IMR-90 (cell line): ENCODE measurements at regions of chr15 and their contacts with region 1.

Region 1: DNA sequence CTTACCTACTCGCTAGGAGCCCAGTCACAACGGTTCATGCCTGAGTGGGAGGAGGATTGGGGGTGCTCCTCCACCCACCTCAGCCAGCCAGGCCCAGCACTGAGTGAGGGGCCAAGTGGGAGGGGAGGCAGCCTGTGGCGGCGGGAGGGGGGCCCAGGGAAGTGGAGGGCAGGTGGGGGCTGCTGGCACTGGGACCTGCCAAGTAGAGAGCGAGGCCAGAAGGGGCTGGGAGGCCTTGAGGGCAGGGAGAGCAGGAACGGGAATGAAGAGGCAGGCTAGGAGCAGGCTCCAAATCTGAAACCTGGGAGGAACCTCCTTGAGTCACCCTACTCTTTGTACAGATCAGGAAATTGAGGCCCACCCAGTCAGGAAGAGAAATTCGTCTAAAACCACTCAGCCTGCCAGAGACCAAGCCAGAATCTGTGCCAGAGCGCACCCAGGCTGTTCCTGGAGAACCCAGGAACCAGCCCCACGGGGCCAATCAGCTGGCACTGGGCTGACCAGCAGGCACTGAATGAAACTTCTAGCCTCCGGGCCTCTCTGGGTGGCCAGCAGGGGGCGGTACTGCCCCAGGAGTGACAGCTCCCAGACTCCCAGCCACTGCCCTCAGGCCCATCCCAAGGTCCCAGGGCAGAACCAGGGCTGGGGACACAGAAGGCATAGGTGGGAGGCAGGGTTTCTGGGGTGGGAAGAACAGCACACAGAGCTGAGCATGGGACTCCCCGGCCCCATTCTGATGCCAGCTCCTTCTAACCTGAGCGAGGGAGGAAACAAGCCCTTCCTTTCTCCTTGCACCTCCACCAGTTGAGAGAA is 14.8 kb upstream of the CYP11A1 start:
- DNase-seq: peak; percentile 75
- ATAC-seq: peak; percentile 98
- H3K4me3 ChIP-seq: no peak overlapping the region
- H3K27ac ChIP-seq: no peak overlapping the region
- H3K4me1 ChIP-seq: peaks cover 4% of the 10 kb centered on the region; the same call in 1 of the 2 replicates
- H3K27me3 ChIP-seq: no peaks in the 10 kb centered on the region
- CTCF ChIP-seq: peak; percentile 97
- POLR2A ChIP-seq: 0 out of 2 replicates have a peak, but pooled peaks have one; percentile 38
- RAD21 ChIP-seq: peak; percentile 99

Region 2: DNA sequence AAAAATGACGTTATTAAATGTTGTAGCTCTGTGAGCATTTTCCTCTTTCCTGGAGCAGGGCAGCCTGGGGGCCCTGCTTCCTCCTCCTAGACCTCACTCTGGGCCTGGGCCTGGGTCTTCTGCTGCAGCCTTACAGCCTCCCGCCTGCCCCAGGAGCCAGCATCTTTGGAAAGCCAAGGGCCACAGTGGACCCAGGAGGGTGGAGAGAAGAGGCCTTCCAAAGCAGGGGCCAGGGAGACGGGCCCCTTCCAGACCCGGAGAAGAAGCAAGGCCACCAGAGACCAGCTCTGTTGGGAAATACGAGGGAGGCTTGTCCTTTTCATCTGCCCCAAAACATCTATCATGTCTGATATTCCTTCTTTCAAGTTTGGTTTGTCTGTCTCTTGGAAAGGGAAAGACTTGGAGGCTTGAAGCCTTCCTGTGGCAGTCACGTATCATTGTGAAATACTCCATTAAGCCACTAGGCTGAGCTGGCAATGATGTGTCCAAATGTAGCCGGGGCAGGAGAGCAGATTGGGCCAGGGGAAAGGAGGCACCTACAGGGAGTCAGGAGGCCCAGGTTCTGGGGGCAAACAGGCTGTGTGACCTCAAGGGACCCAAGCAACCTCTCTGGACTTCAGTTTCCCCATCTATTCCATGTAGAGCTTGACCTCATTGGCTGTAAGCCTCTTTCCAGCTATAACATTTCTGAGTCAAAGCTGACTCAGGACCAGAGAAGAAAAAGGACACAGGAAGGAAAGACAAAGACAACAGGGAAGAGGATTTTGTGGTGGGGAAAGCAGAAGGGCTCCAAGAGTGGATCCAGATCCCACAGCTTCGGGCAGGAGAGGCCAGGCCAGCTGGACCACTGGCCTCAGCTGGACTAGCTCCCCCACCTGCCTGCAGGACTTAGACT is 45.9 kb before region 1 on chr15:
- CTCF ChIA-PET with region 1: no interaction called
- POLR2A ChIA-PET with region 1: no interaction called
- dilution Hi-C with region 1: no loop called
- in situ Hi-C with region 1: no loop called
- intact Hi-C with region 1: no loop called
- DNase-seq: peak; percentile 37
- ATAC-seq: peak; percentile 25; the same call in 1 of the 2 replicates
- H3K4me3 ChIP-seq: no peak overlapping the region
- H3K27ac ChIP-seq: no peak overlapping the region
- H3K4me1 ChIP-seq: peaks cover 2% of the 10 kb centered on the region; the same call in 1 of the 2 replicates
- H3K27me3 ChIP-seq: peaks cover 25% of the 10 kb centered on the region
- CTCF ChIP-seq: no peak
- POLR2A ChIP-seq: no peak
- RAD21 ChIP-seq: no peak

Region 3: GRCh38 chr15:74392451-74392830 is 10.2 kb after region 1 on chr15:
- CTCF ChIA-PET with region 1: interaction called, 11 read pairs
- POLR2A ChIA-PET with region 1: no interaction called
- dilution Hi-C with region 1: no loop called
- in situ Hi-C with region 1: no loop called
- intact Hi-C with region 1: no loop called
- DNase-seq: peak; percentile 48
- ATAC-seq: peak; percentile 75
- H3K4me3 ChIP-seq: no peak overlapping the region
- H3K27ac ChIP-seq: no peak overlapping the region
- H3K4me1 ChIP-seq: peaks cover 31% of the 10 kb centered on the region
- H3K27me3 ChIP-seq: no peaks in the 10 kb centered on the region
- CTCF ChIP-seq: no peak
- POLR2A ChIP-seq: no peak
- RAD21 ChIP-seq: 0 out of 2 replicates have a peak, but pooled peaks have one; percentile 8

Region 4: DNA sequence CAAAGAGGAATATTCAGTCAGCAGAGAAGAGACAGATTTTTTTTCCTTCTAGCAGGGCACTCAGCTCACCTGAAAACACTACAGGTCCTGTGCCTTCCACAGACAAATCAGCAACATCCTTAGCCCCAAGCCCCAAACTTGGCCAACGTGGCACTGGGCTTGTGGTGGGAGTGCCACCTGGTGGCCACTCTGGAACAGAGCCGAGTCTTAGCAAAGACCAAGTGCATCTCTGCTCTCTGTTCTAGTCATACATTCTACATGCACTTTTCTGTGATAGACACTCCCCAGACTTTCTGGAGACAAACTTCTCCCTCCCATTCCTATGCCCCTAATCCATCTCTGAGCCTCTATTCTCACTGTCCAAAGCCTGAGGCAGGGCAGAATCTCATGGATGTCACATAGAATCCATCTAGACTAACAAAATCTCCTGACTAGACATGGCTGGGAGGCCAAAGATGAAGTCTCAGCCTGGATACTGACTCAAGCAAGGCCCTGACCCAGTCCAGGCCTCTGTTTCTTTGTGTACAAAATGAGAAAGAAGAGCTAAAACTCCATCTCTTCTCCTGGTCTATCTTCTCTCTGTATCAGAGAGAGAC is 56.6 kb after region 1 on chr15:
- CTCF ChIA-PET with region 1: interaction called, 31 read pairs
- POLR2A ChIA-PET with region 1: no interaction called
- dilution Hi-C with region 1: no loop called
- in situ Hi-C with region 1: loop called (anchors 5 kb)
- intact Hi-C with region 1: loop called (anchors 1 kb)
- DNase-seq: peak; percentile 77
- ATAC-seq: peak; percentile 68
- H3K4me3 ChIP-seq: no peak overlapping the region
- H3K27ac ChIP-seq: no peak overlapping the region
- H3K4me1 ChIP-seq: peaks cover 14% of the 10 kb centered on the region
- H3K27me3 ChIP-seq: no peaks in the 10 kb centered on the region
- CTCF ChIP-seq: peak; percentile 95
- POLR2A ChIP-seq: peak; percentile 49
- RAD21 ChIP-seq: peak; percentile 99

Region 5: GRCh38 chr15:74489518-74490338 is 107.5 kb after region 1 on chr15:
- CTCF ChIA-PET with region 1: interaction called, 3 read pairs
- POLR2A ChIA-PET with region 1: no interaction called
- dilution Hi-C with region 1: no loop called
- in situ Hi-C with region 1: no loop called
- intact Hi-C with region 1: loop called (anchors 2 kb)
- DNase-seq: peak; percentile 49
- ATAC-seq: peak; percentile 90
- H3K4me3 ChIP-seq: no peak overlapping the region
- H3K27ac ChIP-seq: no peak overlapping the region
- H3K4me1 ChIP-seq: no peaks in the 10 kb centered on the region
- H3K27me3 ChIP-seq: no peaks in the 10 kb centered on the region
- CTCF ChIP-seq: peak; percentile 66
- POLR2A ChIP-seq: no peak
- RAD21 ChIP-seq: peak; percentile 71

Region 6: DNA sequence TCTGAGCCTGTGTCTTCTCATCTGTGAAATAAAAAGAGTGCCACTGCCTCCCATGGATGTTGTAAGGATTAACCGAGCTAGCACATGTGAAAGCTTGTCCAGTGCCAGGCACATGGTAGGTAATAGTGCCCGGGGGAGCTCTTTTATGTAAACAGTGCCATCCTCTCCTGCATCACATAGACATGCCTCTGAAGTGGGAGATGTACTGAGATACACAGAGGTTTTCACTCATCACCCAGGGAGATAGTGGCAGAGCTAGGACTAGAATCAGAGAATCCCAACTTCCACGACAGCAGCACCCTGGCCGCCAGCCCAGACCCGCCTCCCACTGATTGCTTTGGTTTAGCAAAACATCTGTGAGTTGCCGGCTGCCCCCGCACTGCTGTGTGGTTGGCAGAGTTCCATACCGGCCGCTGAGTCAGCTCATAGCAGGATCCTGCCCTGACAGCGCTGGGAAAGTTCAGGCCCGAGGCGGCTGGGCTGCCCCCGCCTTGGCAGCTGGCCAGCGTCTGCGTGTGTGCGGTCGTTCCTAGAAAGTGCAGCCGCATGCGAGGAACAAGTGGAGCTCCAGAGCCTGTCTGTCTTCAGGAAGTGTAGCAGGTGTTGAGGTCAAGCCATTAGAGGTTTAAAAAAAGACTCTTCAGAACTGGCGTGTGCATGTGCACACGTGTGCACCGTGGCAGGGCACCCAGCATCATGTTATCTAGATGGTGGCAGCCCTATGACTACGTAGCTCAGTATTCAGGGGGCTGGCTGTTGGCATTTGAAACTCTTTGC is 163.9 kb after region 1 on chr15:
- CTCF ChIA-PET with region 1: no interaction called
- POLR2A ChIA-PET with region 1: no interaction called
- dilution Hi-C with region 1: no loop called
- in situ Hi-C with region 1: no loop called
- intact Hi-C with region 1: loop called (anchors 5 kb)
- DNase-seq: peak; percentile 100
- ATAC-seq: peak; percentile 89
- H3K4me3 ChIP-seq: no peak overlapping the region
- H3K27ac ChIP-seq: no peak overlapping the region
- H3K4me1 ChIP-seq: peaks cover 4% of the 10 kb centered on the region
- H3K27me3 ChIP-seq: no peaks in the 10 kb centered on the region
- CTCF ChIP-seq: no peak
- POLR2A ChIP-seq: no peak; the same call in 1 of the 2 replicates
- RAD21 ChIP-seq: peak; percentile 13; the same call in 1 of the 2 replicates

Region 7: DNA sequence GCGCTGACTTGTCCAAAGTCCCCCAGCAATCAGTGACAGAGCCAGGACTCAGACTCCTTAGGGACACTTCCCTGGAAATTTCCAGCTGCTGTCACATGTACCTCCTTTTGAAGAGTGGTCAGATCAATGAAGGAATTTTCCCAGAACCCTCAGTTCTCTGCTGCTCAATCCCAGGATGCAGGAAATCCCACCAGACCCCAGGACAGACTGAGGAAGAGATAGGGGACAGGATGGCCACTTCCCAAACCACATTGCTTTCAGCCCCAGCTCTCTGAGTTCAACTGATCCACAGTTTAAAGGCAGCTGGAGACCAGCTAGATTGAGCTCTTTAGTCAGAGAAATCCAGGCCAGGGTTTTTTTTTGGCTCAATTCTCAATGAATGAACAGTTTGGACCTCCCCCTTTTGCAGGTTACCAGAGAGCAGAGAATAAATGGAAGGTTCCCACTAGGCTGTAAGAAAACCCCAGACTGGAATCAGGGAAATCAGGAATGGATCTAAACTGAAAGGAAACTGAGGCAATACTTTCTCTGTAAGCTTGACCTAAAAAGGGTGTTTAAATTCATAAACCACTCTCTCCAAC is 341.6 kb after region 1 on chr15:
- CTCF ChIA-PET with region 1: no interaction called
- POLR2A ChIA-PET with region 1: no interaction called
- dilution Hi-C with region 1: no loop called
- in situ Hi-C with region 1: no loop called
- intact Hi-C with region 1: no loop called
- DNase-seq: peak; percentile 46
- ATAC-seq: 0 out of 2 replicates have a peak, but pooled peaks have one; percentile 18
- H3K4me3 ChIP-seq: no peak overlapping the region
- H3K27ac ChIP-seq: no peak overlapping the region
- H3K4me1 ChIP-seq: no peaks in the 10 kb centered on the region
- H3K27me3 ChIP-seq: peaks cover 75% of the 10 kb centered on the region
- CTCF ChIP-seq: no peak
- POLR2A ChIP-seq: no peak
- RAD21 ChIP-seq: no peak